ENCODE measurements at regions of chr12 and their contacts with region 1.

Region 1: DNA sequence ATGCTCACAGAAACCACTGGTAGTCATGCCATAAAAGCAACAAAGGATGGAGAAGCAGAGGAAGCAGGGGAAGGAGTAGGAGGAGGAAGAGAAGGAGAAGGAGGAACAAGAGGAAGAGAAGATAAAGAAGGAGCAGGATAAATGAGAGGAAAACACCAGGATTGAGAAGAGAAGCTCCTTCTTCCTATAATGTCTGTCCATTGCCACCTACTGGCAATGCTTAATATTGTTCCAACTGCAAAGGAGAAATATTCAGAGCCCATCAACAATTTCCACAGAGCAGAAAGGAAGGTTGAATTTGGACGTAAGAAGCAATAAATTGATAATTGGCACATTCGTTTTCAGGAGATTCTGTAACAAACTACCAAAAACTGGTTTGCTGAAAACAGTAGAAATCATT is 898.4 kb downstream of the SLC16A7 start:
- DNase-seq: peak; percentile 13
- H3K4me3 Mint-ChIP-seq: no peak overlapping the region
- H3K27ac Mint-ChIP-seq: no peak overlapping the region
- H3K4me1 Mint-ChIP-seq: peaks cover 9% of the 10 kb centered on the region
- H3K27me3 Mint-ChIP-seq: no peaks in the 10 kb centered on the region
- CTCF ChIP-seq: peak; percentile 59

Region 2: DNA sequence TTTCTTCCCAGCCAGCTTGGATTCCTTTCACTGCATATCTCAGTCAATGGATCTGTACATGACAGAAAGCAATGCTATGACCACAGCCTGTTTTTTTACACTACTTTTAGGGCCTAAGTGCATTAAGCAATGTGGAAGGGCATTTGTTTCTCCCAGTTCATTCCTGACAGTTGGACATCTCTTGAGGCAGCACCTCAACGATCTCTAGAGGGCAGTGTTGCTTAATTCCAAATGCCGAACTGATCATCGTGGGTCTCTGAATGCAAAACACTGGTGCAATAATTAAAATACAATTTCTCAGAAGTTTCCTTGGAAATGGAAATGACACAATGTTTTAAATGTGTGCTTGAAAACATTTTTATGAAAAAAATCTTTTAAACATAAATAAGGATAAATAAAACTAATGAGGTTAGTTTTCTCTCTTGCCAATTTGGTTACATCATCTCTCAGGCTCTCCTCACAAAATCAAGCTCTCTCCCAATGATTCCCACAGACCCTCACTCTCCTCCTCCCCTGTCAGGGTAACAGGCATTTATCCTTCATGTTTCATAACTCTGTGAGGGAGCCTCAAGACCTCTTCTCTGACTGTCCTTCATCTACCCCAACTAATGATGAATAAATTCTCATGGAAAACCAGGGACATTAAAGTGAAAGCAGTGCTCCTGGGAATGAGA is 1090.8 kb before region 1 on chr12:
- CTCF ChIA-PET with region 1: no interaction called
- intact Hi-C with region 1: loop called (anchors 10 kb)
- DNase-seq: peak; percentile 60
- H3K4me3 Mint-ChIP-seq: peak overlapping the region; percentile 44
- H3K27ac Mint-ChIP-seq: peak overlapping the region; percentile 82
- H3K4me1 Mint-ChIP-seq: peaks cover 11% of the 10 kb centered on the region
- H3K27me3 Mint-ChIP-seq: no peaks in the 10 kb centered on the region
- CTCF ChIP-seq: peak; percentile 71

Region 3: DNA sequence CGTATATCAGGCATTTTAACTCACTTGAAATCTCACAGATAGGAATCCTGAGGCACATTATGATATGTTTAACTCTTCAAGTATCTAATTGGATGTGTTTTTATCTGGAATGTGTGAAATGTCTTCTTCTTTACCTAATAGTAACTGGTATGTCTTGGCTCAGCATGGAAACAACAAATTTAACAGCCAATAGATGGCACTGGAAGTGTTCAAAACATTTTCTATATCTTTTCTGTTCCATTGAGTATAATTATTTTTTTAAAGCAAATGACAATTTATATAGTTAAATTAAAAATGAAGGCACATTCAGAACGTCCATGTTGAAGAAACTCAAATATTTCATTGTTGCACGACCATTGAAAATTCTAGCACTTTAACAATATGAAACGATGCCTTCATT is 1063.0 kb before region 1 on chr12:
- CTCF ChIA-PET with region 1: interaction called, 4 read pairs
- intact Hi-C with region 1: loop called (anchors 2 kb)
- DNase-seq: no peak
- H3K4me3 Mint-ChIP-seq: no peak overlapping the region
- H3K27ac Mint-ChIP-seq: no peak overlapping the region
- H3K4me1 Mint-ChIP-seq: no peaks in the 10 kb centered on the region
- H3K27me3 Mint-ChIP-seq: no peaks in the 10 kb centered on the region
- CTCF ChIP-seq: no peak

Region 4: GRCh38 chr12:59911516-59911915 is 582.7 kb before region 1 on chr12:
- CTCF ChIA-PET with region 1: no interaction called
- intact Hi-C with region 1: loop called (anchors 10 kb)
- DNase-seq: peak; percentile 58
- H3K4me3 Mint-ChIP-seq: peak overlapping the region; percentile 47
- H3K27ac Mint-ChIP-seq: peak overlapping the region; percentile 80
- H3K4me1 Mint-ChIP-seq: peaks cover 34% of the 10 kb centered on the region
- H3K27me3 Mint-ChIP-seq: no peaks in the 10 kb centered on the region
- CTCF ChIP-seq: no peak

Region 5: DNA sequence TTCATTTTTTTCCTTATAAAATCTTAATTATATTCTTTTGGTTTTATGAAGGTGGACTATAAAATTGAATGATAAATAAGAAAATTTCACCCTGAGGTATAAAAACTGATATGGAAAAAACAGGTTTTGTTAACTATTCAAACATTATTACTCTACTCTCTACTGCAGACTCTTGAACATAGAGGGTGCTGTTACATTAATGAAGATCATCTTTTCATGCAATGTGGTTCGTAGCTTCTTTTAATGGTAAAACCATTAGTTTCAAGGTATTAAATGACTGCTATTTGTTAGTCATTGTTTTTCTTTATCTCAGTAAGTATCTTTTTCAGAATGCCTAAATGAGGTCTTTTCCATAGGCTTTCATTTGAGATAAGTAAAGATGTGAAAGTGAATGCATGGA is 388.0 kb before region 1 on chr12:
- CTCF ChIA-PET with region 1: interaction called, 8 read pairs
- intact Hi-C with region 1: loop called (anchors 1 kb)
- DNase-seq: no peak
- H3K4me3 Mint-ChIP-seq: no peak overlapping the region
- H3K27ac Mint-ChIP-seq: no peak overlapping the region
- H3K4me1 Mint-ChIP-seq: peaks cover 7% of the 10 kb centered on the region
- H3K27me3 Mint-ChIP-seq: no peaks in the 10 kb centered on the region
- CTCF ChIP-seq: no peak

Region 6: GRCh38 chr12:60257063-60257462 is 237.2 kb before region 1 on chr12:
- CTCF ChIA-PET with region 1: interaction called, 13 read pairs
- intact Hi-C with region 1: loop called (anchors 1 kb)
- DNase-seq: peak; percentile 36
- H3K4me3 Mint-ChIP-seq: no peak overlapping the region
- H3K27ac Mint-ChIP-seq: peak overlapping the region; percentile 1
- H3K4me1 Mint-ChIP-seq: peaks cover 29% of the 10 kb centered on the region
- H3K27me3 Mint-ChIP-seq: no peaks in the 10 kb centered on the region
- CTCF ChIP-seq: no peak